ENCODE measurements at regions of chr10 and their contacts with region 1.

Region 1: GRCh38 chr10:91923371-91924211 is at the start of gene BTAF1:
- DNase-seq: peak; percentile 97
- H3K4me3 Mint-ChIP-seq: peak within 1 kb of the TSS; percentile 87
- H3K27ac Mint-ChIP-seq: peak within 1 kb of the TSS; percentile 99
- H3K4me1 Mint-ChIP-seq: peaks cover 28% of the 10 kb centered on the region
- H3K27me3 Mint-ChIP-seq: peaks cover 2% of the 10 kb centered on the region
- total RNA-seq, gene BTAF1: 63.9 and 67.1 TPM in 2 replicates

Region 2: GRCh38 chr10:90484518-90484917 is 1439.1 kb before region 1 on chr10:
- intact Hi-C with region 1: no loop called
- DNase-seq: no peak
- H3K4me3 Mint-ChIP-seq: no peak overlapping the region
- H3K27ac Mint-ChIP-seq: no peak overlapping the region
- H3K4me1 Mint-ChIP-seq: no peaks in the 10 kb centered on the region
- H3K27me3 Mint-ChIP-seq: no peaks in the 10 kb centered on the region

Region 3: DNA sequence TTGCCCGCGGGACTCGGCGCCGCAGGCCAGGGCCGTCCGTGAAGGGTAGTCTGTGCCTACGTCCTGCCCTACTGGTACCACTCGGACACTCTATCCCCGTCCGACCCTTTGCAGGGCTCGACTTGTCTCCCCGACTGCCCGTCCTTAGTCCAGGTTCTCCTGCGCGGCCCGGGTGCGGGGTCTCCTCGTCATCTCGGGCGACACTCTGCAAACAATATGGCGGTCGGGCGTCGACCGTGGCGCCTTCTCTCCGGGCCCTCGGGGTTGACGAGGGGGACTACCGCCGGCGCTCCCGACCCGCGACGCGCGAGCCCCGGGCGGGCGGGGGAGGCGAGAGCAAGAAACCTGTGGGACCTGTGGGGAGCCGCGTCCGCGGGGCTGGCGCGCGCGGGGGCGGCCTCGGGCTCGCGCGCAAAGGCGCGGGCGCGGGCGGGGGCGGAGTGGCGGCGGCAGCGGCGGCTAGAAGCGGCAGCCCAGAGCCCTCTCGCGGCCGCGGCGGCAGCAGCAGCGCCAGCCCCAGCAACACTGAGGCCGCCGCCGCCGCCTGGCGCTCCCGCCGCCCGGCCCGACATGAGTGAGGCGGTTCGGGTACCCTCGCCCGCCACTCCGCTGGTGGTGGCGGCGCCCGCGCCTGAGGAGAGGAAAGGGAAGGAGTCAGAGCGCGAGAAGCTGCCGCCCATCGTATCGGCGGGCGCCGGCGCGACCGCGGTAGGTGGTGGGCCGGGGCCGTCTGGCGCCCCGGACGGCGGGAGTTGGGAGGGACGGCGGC is 513.5 kb before region 1 on chr10 and contains the start of gene HECTD2:
- intact Hi-C with region 1: loop called (anchors 5 kb)
- DNase-seq: peak; percentile 94
- H3K4me3 Mint-ChIP-seq: peak within 1 kb of the TSS; percentile 93
- H3K27ac Mint-ChIP-seq: peak within 1 kb of the TSS; percentile 96
- H3K4me1 Mint-ChIP-seq: peaks cover 17% of the 10 kb centered on the region
- H3K27me3 Mint-ChIP-seq: peaks cover 25% of the 10 kb centered on the region
- total RNA-seq, gene HECTD2: 4.5 and 5.5 TPM in 2 replicates

Region 4: GRCh38 chr10:91944880-91945630 is 21.5 kb after region 1 on chr10:
- intact Hi-C with region 1: loop called (anchors 1 kb)
- DNase-seq: peak; percentile 73
- H3K4me3 Mint-ChIP-seq: peak overlapping the region; percentile 60
- H3K27ac Mint-ChIP-seq: peak overlapping the region; percentile 84
- H3K4me1 Mint-ChIP-seq: peaks cover 22% of the 10 kb centered on the region
- H3K27me3 Mint-ChIP-seq: no peaks in the 10 kb centered on the region

Region 5: DNA sequence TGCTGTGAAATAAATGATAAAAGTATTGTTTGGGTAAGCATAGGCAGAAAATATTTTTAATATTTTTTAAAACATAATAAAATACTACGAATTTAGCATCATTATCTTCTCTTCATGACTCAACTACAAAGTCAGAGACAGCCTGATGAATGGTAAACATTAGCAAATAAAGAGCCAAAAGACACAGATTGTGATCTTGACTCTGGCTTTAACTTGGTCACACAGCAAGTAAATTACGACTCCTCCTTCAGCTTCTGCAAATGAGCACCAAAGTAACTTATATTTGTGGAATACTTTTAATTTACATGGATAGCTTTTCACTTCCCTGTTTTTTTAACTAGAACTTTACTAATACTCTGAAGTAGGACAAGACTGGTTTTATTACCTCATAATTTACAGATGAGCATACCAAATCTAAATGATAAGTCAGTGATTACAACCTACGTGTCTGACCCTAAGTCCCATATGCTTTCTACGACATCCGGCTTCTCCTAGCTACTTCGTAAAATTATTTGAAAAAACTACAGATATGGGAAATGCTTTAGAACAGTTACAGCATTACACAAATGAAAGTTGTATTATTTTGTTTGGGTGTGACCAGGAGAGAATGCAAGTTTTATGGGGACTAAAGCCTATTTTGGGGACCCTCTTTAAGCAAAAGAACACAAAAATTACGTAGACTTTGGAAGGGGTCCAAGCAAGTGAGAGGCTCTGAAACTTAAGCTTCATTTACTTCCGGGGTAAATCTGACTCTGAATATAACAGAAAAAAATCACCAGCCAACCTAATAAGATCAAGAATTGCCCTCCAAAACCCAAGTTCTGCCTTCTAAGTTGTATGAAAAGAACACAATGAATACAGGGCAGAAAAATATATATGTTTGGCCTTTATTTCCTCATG is 233.5 kb after region 1 on chr10:
- intact Hi-C with region 1: no loop called
- DNase-seq: no peak
- H3K4me3 Mint-ChIP-seq: no peak overlapping the region
- H3K27ac Mint-ChIP-seq: no peak overlapping the region
- H3K4me1 Mint-ChIP-seq: no peaks in the 10 kb centered on the region
- H3K27me3 Mint-ChIP-seq: no peaks in the 10 kb centered on the region